ENCODE measurements at regions of chr7 and their contacts with region 1.

Region 1: GRCh38 chr7:157022681-157023588 is 12.5 kb upstream of the MNX1 start:
- DNase-seq: no peak
- ATAC-seq: no peak
- H3K4me3 Mint-ChIP-seq: no peak overlapping the region
- H3K27ac Mint-ChIP-seq: no peak overlapping the region
- H3K4me1 Mint-ChIP-seq: peaks cover 7% of the 10 kb centered on the region
- H3K27me3 Mint-ChIP-seq: peaks cover 57% of the 10 kb centered on the region
- CTCF ChIP-seq: no peak

Region 2: DNA sequence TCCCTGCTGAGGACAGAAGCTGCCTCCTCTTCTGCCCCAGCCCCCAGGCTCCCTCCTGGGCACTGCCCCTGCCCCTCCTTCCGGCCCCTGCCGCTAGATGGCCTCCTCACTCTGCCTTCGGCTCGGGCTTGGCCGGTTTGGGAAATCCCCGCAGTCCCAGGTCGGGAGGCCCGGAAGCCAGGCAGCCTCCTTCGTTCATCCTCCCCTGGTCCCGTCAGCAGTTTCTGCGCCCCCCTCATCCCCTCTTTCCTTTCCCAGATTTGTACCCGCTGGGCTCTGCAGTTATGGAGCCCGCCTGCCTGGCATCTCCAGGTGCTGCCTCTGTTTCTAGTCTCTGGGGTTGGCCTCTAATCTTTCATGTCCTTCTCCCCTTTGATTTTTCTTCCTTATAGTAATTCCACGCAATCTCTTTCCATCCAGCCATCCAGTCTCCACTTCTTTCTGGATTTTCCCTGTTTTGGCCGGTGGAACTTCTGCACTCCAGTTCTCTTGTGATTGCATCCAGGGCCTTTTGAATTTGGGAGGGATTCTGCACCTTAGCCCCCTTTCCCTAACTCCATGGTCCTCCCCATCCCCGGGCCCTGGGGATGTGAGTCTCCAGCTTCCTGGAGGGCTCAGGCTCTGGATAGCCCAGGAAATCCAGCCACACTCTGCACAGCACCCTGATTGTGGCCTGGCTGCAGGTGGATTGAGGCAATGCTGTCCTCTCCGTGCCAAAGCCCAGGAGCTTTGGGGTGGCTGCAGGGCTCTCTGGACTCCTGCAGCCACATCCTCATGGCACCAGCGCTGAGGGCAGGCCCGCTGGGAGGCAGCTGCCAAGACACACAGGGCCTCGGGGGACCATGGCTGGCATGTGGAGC is 1207.4 kb before region 1 on chr7:
- CTCF ChIA-PET with region 1: no interaction called
- POLR2A ChIA-PET with region 1: no interaction called
- intact Hi-C with region 1: loop called (anchors 5 kb)
- DNase-seq: peak; percentile 46
- ATAC-seq: peak; percentile 82
- H3K4me3 Mint-ChIP-seq: peak overlapping the region; percentile 49
- H3K27ac Mint-ChIP-seq: no peak overlapping the region
- H3K4me1 Mint-ChIP-seq: peaks cover 11% of the 10 kb centered on the region
- H3K27me3 Mint-ChIP-seq: peaks cover 55% of the 10 kb centered on the region
- CTCF ChIP-seq: no peak

Region 3: GRCh38 chr7:157004050-157004838 is 18.7 kb before region 1 on chr7:
- CTCF ChIA-PET with region 1: no interaction called
- POLR2A ChIA-PET with region 1: no interaction called
- intact Hi-C with region 1: loop called (anchors 2 kb)
- DNase-seq: no peak
- ATAC-seq: no peak
- H3K4me3 Mint-ChIP-seq: no peak overlapping the region
- H3K27ac Mint-ChIP-seq: no peak overlapping the region
- H3K4me1 Mint-ChIP-seq: peaks cover 26% of the 10 kb centered on the region
- H3K27me3 Mint-ChIP-seq: peaks cover 53% of the 10 kb centered on the region
- CTCF ChIP-seq: no peak

Region 4: GRCh38 chr7:157046681-157047080 is 23.7 kb after region 1 on chr7:
- CTCF ChIA-PET with region 1: no interaction called
- POLR2A ChIA-PET with region 1: no interaction called
- intact Hi-C with region 1: no loop called
- DNase-seq: no peak
- ATAC-seq: no peak
- H3K4me3 Mint-ChIP-seq: no peak overlapping the region
- H3K27ac Mint-ChIP-seq: no peak overlapping the region
- H3K4me1 Mint-ChIP-seq: no peaks in the 10 kb centered on the region
- H3K27me3 Mint-ChIP-seq: peaks cover 11% of the 10 kb centered on the region
- CTCF ChIP-seq: no peak

Region 5: DNA sequence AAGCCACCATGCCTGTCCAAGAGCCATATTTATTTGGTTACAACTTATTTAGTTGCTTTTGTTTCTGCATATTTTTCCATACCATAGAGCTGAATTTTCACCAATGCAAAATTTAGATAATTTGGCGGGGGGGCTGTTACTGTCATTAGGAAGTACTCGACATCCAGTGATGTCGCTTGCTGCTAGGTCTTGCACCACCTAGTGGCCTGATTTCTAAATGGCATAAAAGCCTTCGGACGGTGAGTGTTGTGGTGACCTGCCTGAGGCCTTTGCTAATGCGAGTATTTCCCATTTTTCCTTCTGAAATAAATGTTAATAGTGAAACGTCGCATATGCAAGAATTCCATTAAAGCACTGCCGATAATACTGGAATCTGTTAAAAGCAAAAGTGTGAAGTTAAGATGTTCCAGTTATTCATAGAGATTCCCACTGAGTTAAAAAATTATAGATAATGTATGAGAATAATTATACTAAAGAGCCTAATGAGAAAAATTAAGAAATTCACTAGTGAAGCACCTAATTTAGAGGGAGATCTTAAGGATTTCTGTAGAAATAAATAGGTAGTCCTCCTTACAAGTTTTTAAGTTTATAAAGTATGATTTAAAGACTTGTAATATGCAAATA is 227.8 kb after region 1 on chr7:
- CTCF ChIA-PET with region 1: no interaction called
- POLR2A ChIA-PET with region 1: no interaction called
- intact Hi-C with region 1: no loop called
- DNase-seq: no peak
- ATAC-seq: peak; percentile 58
- H3K4me3 Mint-ChIP-seq: no peak overlapping the region
- H3K27ac Mint-ChIP-seq: no peak overlapping the region
- H3K4me1 Mint-ChIP-seq: peaks cover 2% of the 10 kb centered on the region
- H3K27me3 Mint-ChIP-seq: no peaks in the 10 kb centered on the region
- CTCF ChIP-seq: peak; percentile 71